Naive thymus-derived CD4-positive, alpha-beta T cell (primary cell): ENCODE measurements at regions of chr15 and their contacts with region 1.

Region 1: GRCh38 chr15:84023636-84024035 is 211.9 kb upstream of the GOLGA6L4 start:
- DNase-seq: no peak
- ATAC-seq: no peak
- H3K4me3 ChIP-seq: no peak overlapping the region
- H3K4me3 Mint-ChIP-seq: no peak overlapping the region
- H3K27ac ChIP-seq: no peak overlapping the region
- H3K27ac Mint-ChIP-seq: no peak overlapping the region
- H3K4me1 ChIP-seq: no peaks in the 10 kb centered on the region
- H3K4me1 Mint-ChIP-seq: no peaks in the 10 kb centered on the region
- H3K27me3 ChIP-seq: no peaks in the 10 kb centered on the region
- H3K27me3 Mint-ChIP-seq: peaks cover 0 to 33% (median 12%) of the 10 kb centered on the region in 5 donors

Region 2: GRCh38 chr15:83571820-83572707 is 451.6 kb before region 1 on chr15:
- CTCF ChIA-PET with region 1: no interaction called
- POLR2A ChIA-PET with region 1: no interaction called
- intact Hi-C with region 1: loop called in 1 of 2 experiments (anchors 5 kb)
- DNase-seq: peak in 1 of 9 donors; percentile 2
- ATAC-seq: no peak
- H3K4me3 ChIP-seq: no peak overlapping the region
- H3K4me3 Mint-ChIP-seq: no peak overlapping the region
- H3K27ac ChIP-seq: no peak overlapping the region
- H3K27ac Mint-ChIP-seq: no peak overlapping the region
- H3K4me1 ChIP-seq: no peaks in the 10 kb centered on the region
- H3K4me1 Mint-ChIP-seq: no peaks in the 10 kb centered on the region
- H3K27me3 ChIP-seq: peaks cover 0 to 4% of the 10 kb centered on the region in 2 donors
- H3K27me3 Mint-ChIP-seq: peaks cover 0 to 17% (median 0%) of the 10 kb centered on the region in 5 donors

Region 3: DNA sequence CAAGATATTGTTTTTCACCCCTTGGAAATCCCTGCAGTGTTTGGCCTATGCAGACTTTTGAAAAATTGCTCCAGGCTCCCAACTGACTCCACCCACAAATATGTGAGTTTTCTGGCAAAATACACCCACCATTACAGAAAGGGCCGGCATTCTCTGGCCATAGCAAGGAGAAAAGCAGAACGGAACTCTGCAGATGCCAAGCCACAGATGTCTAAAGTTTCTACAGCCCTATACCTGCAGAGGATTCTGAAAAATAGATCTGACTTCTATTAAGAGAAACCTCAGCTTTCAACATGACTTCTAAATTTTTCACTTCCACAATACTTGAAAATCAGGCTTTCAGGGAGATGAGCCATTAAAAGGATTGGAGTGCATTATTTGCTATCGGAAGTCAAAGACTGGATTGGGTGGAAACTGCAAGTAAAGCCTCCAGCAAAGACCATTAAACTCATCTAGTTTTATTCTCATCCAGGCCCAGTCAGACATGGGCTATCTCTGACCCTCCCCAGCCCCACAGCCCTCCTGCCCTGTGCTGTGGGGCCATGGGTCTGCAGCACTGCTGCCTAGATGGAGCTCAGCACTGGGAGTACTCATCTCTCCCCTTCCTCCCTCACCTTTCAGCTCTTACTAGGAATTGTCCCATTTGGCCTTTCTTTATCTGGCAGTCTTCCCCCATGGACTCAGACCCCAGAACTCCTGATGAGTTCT is 31.2 kb before region 1 on chr15:
- CTCF ChIA-PET with region 1: no interaction called
- POLR2A ChIA-PET with region 1: no interaction called
- intact Hi-C with region 1: no loop called
- DNase-seq: no peak
- ATAC-seq: no peak
- H3K4me3 ChIP-seq: no peak overlapping the region
- H3K4me3 Mint-ChIP-seq: no peak overlapping the region
- H3K27ac ChIP-seq: no peak overlapping the region
- H3K27ac Mint-ChIP-seq: no peak overlapping the region
- H3K4me1 ChIP-seq: no peaks in the 10 kb centered on the region
- H3K4me1 Mint-ChIP-seq: no peaks in the 10 kb centered on the region
- H3K27me3 ChIP-seq: no peaks in the 10 kb centered on the region
- H3K27me3 Mint-ChIP-seq: peaks cover 0 to 23% (median 4%) of the 10 kb centered on the region in 5 donors